Activated CD4-positive, alpha-beta T cell treated with anti-CD3 and anti-CD28 coated beads, Interleukin-2, amount 10 ng/mL, durations not matched to agents 24 days and 14 days (primary cell): ENCODE measurements at regions of chr3 and their contacts with region 1.

Region 1: GRCh38 chr3:50227390-50228183 is 8.4 kb upstream of the GNAI2 start:
- DNase-seq: peak; percentile 98
- H3K4me3 Mint-ChIP-seq: peak overlapping the region; percentile 99
- H3K27ac Mint-ChIP-seq: peak overlapping the region; percentile 98
- H3K4me1 Mint-ChIP-seq: peaks cover 30% of the 10 kb centered on the region
- H3K27me3 Mint-ChIP-seq: peaks cover 15% of the 10 kb centered on the region

Region 2: GRCh38 chr3:50121416-50122032 is 106.1 kb before region 1 on chr3:
- intact Hi-C with region 1: loop called (anchors 1 kb)
- DNase-seq: peak; percentile 89
- H3K4me3 Mint-ChIP-seq: no peak overlapping the region
- H3K27ac Mint-ChIP-seq: no peak overlapping the region
- H3K4me1 Mint-ChIP-seq: no peaks in the 10 kb centered on the region
- H3K27me3 Mint-ChIP-seq: no peaks in the 10 kb centered on the region

Region 3: DNA sequence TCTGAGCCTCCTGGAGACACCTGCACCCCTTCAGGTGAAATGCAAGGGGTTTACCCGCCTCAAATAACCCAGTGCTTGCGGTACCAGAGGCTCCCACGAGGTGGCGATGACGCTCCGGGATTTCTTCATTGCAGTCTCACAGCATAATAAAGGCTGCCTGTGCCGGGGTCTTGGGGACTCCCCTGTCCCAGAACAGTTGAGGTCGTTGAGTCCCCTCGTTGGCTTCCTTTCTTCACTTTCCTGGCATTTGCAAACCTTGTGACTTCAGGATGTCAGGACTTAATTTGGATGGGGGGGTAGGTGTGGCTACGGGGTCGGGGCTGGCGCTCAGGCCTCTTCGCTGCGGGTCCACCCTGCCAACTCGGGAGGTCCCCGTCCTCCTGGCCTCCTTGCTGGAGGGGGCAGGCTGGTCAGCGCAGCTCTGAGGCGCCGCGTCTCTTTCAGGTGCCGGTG is 34.9 kb before region 1 on chr3:
- intact Hi-C with region 1: loop called (anchors 1 kb)
- DNase-seq: peak; percentile 96
- H3K4me3 Mint-ChIP-seq: no peak overlapping the region
- H3K27ac Mint-ChIP-seq: no peak overlapping the region
- H3K4me1 Mint-ChIP-seq: peaks cover 5% of the 10 kb centered on the region
- H3K27me3 Mint-ChIP-seq: peaks cover 23% of the 10 kb centered on the region

Region 4: GRCh38 chr3:50245831-50246516 is 18.4 kb after region 1 on chr3:
- intact Hi-C with region 1: loop called (anchors 1 kb)
- DNase-seq: peak; percentile 98
- H3K4me3 Mint-ChIP-seq: peak overlapping the region; percentile 86
- H3K27ac Mint-ChIP-seq: peak overlapping the region; percentile 92
- H3K4me1 Mint-ChIP-seq: peaks cover 57% of the 10 kb centered on the region
- H3K27me3 Mint-ChIP-seq: no peaks in the 10 kb centered on the region

Region 5: GRCh38 chr3:50260027-50260941 is 32.7 kb after region 1 on chr3:
- intact Hi-C with region 1: loop called (anchors 1 kb)
- DNase-seq: peak; percentile 97
- H3K4me3 Mint-ChIP-seq: peak overlapping the region; percentile 71
- H3K27ac Mint-ChIP-seq: peak overlapping the region; percentile 81
- H3K4me1 Mint-ChIP-seq: peaks cover 5% of the 10 kb centered on the region
- H3K27me3 Mint-ChIP-seq: no peaks in the 10 kb centered on the region

Region 6: DNA sequence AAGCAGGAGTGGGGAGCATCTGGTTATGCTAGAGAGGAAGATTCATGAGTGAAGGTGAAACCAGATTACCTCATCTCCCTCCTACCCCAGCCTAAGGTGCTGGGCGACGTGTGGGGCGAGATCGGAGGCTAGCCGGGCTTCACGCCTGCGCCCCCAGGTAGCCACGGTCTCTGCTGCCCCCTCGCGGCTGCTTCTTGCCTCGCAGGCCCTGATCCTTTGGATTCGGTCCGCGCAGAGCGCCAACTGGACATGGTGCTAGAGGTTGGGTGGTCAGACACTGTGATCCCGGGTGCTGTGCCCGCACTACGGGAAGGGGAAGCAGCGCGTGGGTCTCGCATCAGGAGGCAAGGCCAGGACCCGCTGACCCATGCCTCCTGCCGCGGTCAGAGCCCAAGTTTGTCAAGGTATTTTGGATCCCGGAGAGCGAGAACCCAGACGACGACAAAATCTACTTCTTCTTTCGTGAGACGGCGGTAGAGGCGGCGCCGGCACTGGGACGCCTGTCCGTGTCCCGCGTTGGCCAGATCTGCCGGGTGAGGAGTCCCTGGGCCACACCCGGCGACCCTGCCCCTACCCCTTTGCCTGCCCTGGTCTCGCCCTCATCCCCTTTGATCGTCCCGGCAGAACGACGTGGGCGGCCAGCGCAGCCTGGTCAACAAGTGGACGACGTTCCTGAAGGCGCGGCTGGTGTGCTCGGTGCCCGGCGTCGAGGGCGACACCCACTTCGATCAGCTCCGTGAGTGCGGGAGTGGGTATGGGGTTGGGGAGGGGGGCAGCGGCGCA is 45.5 kb after region 1 on chr3:
- intact Hi-C with region 1: loop called (anchors 1 kb)
- DNase-seq: peak; percentile 97
- H3K4me3 Mint-ChIP-seq: peak overlapping the region; percentile 86
- H3K27ac Mint-ChIP-seq: no peak overlapping the region
- H3K4me1 Mint-ChIP-seq: peaks cover 28% of the 10 kb centered on the region
- H3K27me3 Mint-ChIP-seq: peaks cover 39% of the 10 kb centered on the region

Region 7: GRCh38 chr3:50321336-50322114 is 93.9 kb after region 1 on chr3:
- intact Hi-C with region 1: loop called (anchors 2 kb)
- DNase-seq: peak; percentile 96
- H3K4me3 Mint-ChIP-seq: peak overlapping the region; percentile 88
- H3K27ac Mint-ChIP-seq: peak overlapping the region; percentile 92
- H3K4me1 Mint-ChIP-seq: peaks cover 27% of the 10 kb centered on the region
- H3K27me3 Mint-ChIP-seq: no peaks in the 10 kb centered on the region

Region 8: GRCh38 chr3:50418850-50419249 is 191.3 kb after region 1 on chr3:
- intact Hi-C with region 1: no loop called
- DNase-seq: no peak
- H3K4me3 Mint-ChIP-seq: no peak overlapping the region
- H3K27ac Mint-ChIP-seq: no peak overlapping the region
- H3K4me1 Mint-ChIP-seq: peaks cover 3% of the 10 kb centered on the region
- H3K27me3 Mint-ChIP-seq: no peaks in the 10 kb centered on the region